T-cell (primary cell): ENCODE measurements at regions of chr6 and their contacts with region 1.

Region 1: DNA sequence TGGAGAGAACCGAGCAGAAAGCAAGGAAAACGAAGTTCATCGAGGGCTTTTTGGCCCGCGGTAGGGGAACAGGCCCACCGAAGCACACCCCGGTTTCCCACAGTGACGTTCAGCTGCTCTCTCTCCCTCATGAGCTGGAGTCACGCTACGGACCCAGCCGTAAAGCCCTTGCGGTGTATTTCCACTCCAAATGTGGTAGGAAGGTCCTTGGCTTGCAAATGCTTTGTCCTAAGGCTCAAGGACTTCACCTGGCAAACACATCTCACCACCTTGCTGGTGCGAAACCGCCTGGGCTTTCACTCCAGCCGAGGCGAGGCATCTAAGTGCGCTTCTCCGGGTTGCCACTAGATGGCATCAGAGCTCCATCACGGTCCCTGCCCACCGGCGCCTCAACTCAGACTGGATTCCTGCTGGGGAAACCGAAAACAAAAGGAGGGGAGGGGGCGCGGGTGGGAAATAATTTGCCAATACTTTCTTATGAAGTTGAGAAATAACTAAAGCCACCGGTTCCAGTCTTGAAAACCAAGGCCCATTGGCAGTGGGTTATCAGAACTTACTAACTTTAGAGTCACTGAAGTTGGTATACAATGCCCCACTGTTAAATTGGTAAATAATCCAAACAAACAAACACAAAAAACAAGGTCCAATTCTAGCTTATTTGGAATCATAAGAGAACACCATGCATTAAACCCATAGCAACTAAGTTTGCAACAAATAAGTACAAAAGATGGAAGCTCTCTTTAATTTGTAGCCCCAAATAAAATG is 13.4 kb upstream of the FOXC1 start:
- DNase-seq: peak in 34 of 35 experiments; percentile 34 to 81 (median 55)
- ATAC-seq: peak; percentile 80 to 84 (median 82)
- H3K4me3 ChIP-seq: no peak overlapping the region
- H3K4me3 Mint-ChIP-seq: peak overlapping the region in 1 of 3 donors; percentile 44
- H3K27ac ChIP-seq: no peak overlapping the region
- H3K27ac Mint-ChIP-seq: no peak overlapping the region
- H3K4me1 ChIP-seq: peaks cover 0 to 6% of the 10 kb centered on the region in 2 experiments
- H3K4me1 Mint-ChIP-seq: peaks cover 5 to 7% (median 6%) of the 10 kb centered on the region in 3 donors
- H3K27me3 ChIP-seq: peaks cover 4 to 69% of the 10 kb centered on the region in 2 experiments
- H3K27me3 Mint-ChIP-seq: peaks cover 51 to 66% of the 10 kb centered on the region in 2 donors

Region 2: GRCh38 chr6:1607516-1608221 is 11.4 kb after region 1 on chr6:
- CTCF ChIA-PET with region 1: interaction called, 8 to 10 read pairs
- POLR2A ChIA-PET with region 1: no interaction called
- DNase-seq: peak in 1 of 35 experiments; percentile 26
- ATAC-seq: no peak
- H3K4me3 ChIP-seq: peak overlapping the region in 1 of 2 donors; percentile 17
- H3K4me3 Mint-ChIP-seq: peak overlapping the region; percentile 35 to 70 (median 47)
- H3K27ac ChIP-seq: no peak overlapping the region
- H3K27ac Mint-ChIP-seq: peak overlapping the region in 1 of 2 donors; percentile 2
- H3K4me1 ChIP-seq: peaks cover 17 to 64% of the 10 kb centered on the region in 2 experiments
- H3K4me1 Mint-ChIP-seq: peaks cover 45 to 50% (median 46%) of the 10 kb centered on the region in 3 donors
- H3K27me3 ChIP-seq: peaks cover 6 to 76% of the 10 kb centered on the region in 2 experiments
- H3K27me3 Mint-ChIP-seq: peaks cover 61 to 65% of the 10 kb centered on the region in 2 donors

Region 3: GRCh38 chr6:2218866-2219265 is 622.6 kb after region 1 on chr6:
- CTCF ChIA-PET with region 1: interaction called in 1 of 2 experiments, 10 read pairs
- POLR2A ChIA-PET with region 1: no interaction called
- DNase-seq: no peak
- ATAC-seq: no peak
- H3K4me3 ChIP-seq: no peak overlapping the region
- H3K4me3 Mint-ChIP-seq: no peak overlapping the region
- H3K27ac ChIP-seq: no peak overlapping the region
- H3K27ac Mint-ChIP-seq: no peak overlapping the region
- H3K4me1 ChIP-seq: peaks cover 2 to 13% of the 10 kb centered on the region in 2 experiments
- H3K4me1 Mint-ChIP-seq: peaks cover 15 to 31% (median 30%) of the 10 kb centered on the region in 3 donors
- H3K27me3 ChIP-seq: no peaks in the 10 kb centered on the region
- H3K27me3 Mint-ChIP-seq: no peaks in the 10 kb centered on the region

Region 4: DNA sequence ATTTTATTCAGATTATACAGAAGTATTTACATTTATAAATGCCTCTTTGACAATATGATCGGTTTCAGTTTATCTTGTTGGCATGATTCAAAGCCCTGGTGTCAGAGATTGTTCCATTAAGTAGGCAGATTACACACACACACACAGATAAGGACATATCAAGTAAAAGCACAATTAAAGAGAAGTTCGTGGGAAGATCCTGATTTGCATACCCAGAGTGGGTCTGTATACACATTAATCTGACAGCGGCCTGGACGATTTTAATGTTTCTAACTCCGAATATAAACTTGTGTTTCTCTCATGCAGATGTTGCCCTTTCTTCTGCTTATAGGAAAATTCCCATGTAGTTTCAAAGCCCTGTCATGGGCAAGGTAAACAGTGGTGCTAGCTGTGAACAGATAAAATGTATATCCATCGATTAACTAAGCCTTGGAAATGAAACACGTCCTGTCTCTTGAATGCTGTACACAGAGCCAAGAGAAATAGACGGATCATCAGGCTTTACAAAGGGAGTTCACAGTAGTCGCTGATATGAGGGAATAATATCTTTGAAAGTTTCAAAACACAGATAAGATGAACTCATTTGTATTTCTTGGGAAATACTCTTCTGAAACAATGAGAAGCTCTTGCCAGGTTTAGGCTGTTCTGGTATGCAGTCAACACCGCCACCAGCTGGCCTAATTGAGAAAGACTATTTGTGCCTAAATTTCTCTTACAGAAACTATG is 757.3 kb after region 1 on chr6:
- CTCF ChIA-PET with region 1: interaction called, 3 to 13 read pairs
- POLR2A ChIA-PET with region 1: interaction called in 1 of 2 experiments, 4 read pairs
- DNase-seq: peak in 31 of 35 experiments; percentile 10 to 62 (median 29)
- ATAC-seq: no peak
- H3K4me3 ChIP-seq: no peak overlapping the region
- H3K4me3 Mint-ChIP-seq: no peak overlapping the region
- H3K27ac ChIP-seq: no peak overlapping the region
- H3K27ac Mint-ChIP-seq: no peak overlapping the region
- H3K4me1 ChIP-seq: no peaks in the 10 kb centered on the region
- H3K4me1 Mint-ChIP-seq: no peaks in the 10 kb centered on the region
- H3K27me3 ChIP-seq: no peaks in the 10 kb centered on the region
- H3K27me3 Mint-ChIP-seq: no peaks in the 10 kb centered on the region

Region 5: DNA sequence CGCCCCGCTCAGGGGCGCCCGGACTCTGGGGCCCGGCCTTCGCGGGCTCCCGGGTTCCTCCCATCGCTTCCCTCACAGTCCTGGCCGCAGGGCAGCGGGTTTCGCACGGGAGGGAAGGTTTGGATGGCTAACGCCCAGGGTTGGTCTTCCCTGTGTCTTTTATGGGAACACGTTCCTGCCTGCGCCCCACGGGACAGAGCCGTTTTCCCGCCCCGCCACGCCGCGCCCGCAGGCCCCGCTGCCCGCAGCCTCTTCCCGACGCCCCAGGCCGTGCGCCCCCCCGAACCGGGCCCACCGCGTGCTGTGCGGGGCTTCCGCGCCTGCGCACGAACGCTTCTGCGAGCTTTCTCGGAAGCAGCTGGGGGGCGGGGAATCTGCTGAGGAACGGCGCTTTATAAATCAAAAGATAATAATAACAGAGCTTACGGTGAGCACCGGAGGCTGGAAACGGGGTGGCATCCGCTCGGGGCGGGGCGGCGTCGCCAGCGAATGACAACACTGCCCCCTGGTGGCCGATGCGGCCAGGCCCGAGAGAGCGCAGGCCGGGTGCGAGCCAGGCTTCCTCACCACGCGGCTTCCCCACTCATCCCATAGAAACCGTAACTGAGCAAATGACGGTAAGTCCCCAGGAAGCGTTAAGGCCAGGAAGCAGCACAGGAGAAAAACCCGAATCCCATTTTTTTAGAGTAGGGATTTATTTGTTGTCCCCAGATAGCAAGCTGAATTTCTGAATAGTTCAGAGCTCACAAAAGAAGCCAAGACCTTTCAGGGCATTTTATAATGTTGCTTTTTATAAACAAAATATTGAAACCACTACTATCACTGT is 1038.1 kb after region 1 on chr6:
- CTCF ChIA-PET with region 1: interaction called, 26 to 53 read pairs
- POLR2A ChIA-PET with region 1: interaction called in 1 of 2 experiments, 3 read pairs
- DNase-seq: peak; percentile 47 to 89 (median 77)
- ATAC-seq: peak; percentile 93 to 98 (median 94)
- H3K4me3 ChIP-seq: peak overlapping the region; percentile 15 to 39
- H3K4me3 Mint-ChIP-seq: peak overlapping the region; percentile 60 to 76 (median 68)
- H3K27ac ChIP-seq: no peak overlapping the region
- H3K27ac Mint-ChIP-seq: no peak overlapping the region
- H3K4me1 ChIP-seq: peaks cover 0 to 9% of the 10 kb centered on the region in 2 experiments
- H3K4me1 Mint-ChIP-seq: peaks cover 4 to 6% (median 5%) of the 10 kb centered on the region in 3 donors
- H3K27me3 ChIP-seq: peaks cover 0 to 49% of the 10 kb centered on the region in 2 experiments
- H3K27me3 Mint-ChIP-seq: peaks cover 17 to 32% of the 10 kb centered on the region in 2 donors

Region 6: DNA sequence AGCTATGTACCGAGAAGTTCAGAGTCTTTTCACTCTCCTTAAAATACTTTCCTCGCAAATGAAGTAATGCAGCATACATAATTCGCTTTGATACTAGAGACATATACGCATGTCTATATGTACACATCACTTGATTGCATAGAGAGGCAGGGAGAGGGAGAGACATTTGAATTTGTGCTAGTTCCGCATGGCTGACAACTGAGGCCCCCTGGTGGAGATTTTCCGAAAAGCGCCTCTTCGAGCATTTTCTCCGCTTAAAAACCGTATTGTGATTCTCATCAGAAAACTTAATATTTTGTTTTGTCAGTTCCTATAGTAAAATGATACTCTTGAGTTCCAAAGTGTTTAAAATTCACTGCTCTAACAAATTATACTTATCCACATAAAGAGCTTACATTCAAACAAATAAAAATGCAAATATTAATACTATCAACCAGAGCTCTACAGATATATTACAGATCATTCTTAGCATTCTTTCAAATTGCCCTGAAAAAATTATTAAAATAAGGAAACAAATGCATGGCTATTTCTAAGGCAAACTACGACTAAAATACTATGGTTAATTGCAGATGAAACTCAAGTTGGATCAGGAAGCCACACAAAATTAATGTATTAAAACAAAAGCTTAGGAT is 1153.8 kb after region 1 on chr6:
- CTCF ChIA-PET with region 1: interaction called, 5 to 10 read pairs
- POLR2A ChIA-PET with region 1: no interaction called
- DNase-seq: peak in 34 of 35 experiments; percentile 29 to 80 (median 58)
- ATAC-seq: peak; percentile 46 to 70 (median 65)
- H3K4me3 ChIP-seq: no peak overlapping the region
- H3K4me3 Mint-ChIP-seq: no peak overlapping the region
- H3K27ac ChIP-seq: no peak overlapping the region
- H3K27ac Mint-ChIP-seq: no peak overlapping the region
- H3K4me1 ChIP-seq: peaks cover 0 to 2% of the 10 kb centered on the region in 2 experiments
- H3K4me1 Mint-ChIP-seq: peaks cover 5 to 9% (median 8%) of the 10 kb centered on the region in 3 donors
- H3K27me3 ChIP-seq: no peaks in the 10 kb centered on the region
- H3K27me3 Mint-ChIP-seq: peaks cover 14 to 23% of the 10 kb centered on the region in 2 donors

Region 7: GRCh38 chr6:2820415-2820814 is 1224.1 kb after region 1 on chr6:
- CTCF ChIA-PET with region 1: interaction called in 1 of 2 experiments, 12 read pairs
- POLR2A ChIA-PET with region 1: no interaction called
- DNase-seq: no peak
- ATAC-seq: no peak
- H3K4me3 ChIP-seq: no peak overlapping the region
- H3K4me3 Mint-ChIP-seq: no peak overlapping the region
- H3K27ac ChIP-seq: no peak overlapping the region
- H3K27ac Mint-ChIP-seq: no peak overlapping the region
- H3K4me1 ChIP-seq: peaks cover 0 to 12% of the 10 kb centered on the region in 2 experiments
- H3K4me1 Mint-ChIP-seq: peaks cover 19 to 29% (median 25%) of the 10 kb centered on the region in 3 donors
- H3K27me3 ChIP-seq: no peaks in the 10 kb centered on the region
- H3K27me3 Mint-ChIP-seq: no peaks in the 10 kb centered on the region